ENCODE measurements at regions of chr9 and their contacts with region 1.

Region 1: GRCh38 chr9:34328987-34329832 is at the starts of genes KIF24 and NUDT2:
- DNase-seq: peak; percentile 100
- H3K4me3 Mint-ChIP-seq: peak within 1 kb of the TSS; percentile 92
- H3K27ac Mint-ChIP-seq: peak within 1 kb of the TSS; percentile 99
- H3K4me1 Mint-ChIP-seq: peaks cover 42% of the 10 kb centered on the region
- H3K27me3 Mint-ChIP-seq: no peaks in the 10 kb centered on the region
- CTCF ChIP-seq: no peak
- total RNA-seq, gene KIF24: 3.3 and 3.5 TPM in 2 replicates
- total RNA-seq, gene NUDT2: 30.6 and 35.0 TPM in 2 replicates

Region 2: GRCh38 chr9:34126207-34127034 is 202.8 kb before region 1 on chr9 and contains the start of gene DCAF12:
- CTCF ChIA-PET with region 1: no interaction called
- POLR2A ChIA-PET with region 1: interaction called, 5 read pairs
- intact Hi-C with region 1: loop called (anchors 2 kb)
- DNase-seq: peak; percentile 93
- H3K4me3 Mint-ChIP-seq: peak within 1 kb of the TSS; percentile 93
- H3K27ac Mint-ChIP-seq: peak within 1 kb of the TSS; percentile 93
- H3K4me1 Mint-ChIP-seq: peaks cover 40% of the 10 kb centered on the region
- H3K27me3 Mint-ChIP-seq: no peaks in the 10 kb centered on the region
- CTCF ChIP-seq: no peak
- total RNA-seq, gene DCAF12: 39.8 and 44.2 TPM in 2 replicates

Region 3: DNA sequence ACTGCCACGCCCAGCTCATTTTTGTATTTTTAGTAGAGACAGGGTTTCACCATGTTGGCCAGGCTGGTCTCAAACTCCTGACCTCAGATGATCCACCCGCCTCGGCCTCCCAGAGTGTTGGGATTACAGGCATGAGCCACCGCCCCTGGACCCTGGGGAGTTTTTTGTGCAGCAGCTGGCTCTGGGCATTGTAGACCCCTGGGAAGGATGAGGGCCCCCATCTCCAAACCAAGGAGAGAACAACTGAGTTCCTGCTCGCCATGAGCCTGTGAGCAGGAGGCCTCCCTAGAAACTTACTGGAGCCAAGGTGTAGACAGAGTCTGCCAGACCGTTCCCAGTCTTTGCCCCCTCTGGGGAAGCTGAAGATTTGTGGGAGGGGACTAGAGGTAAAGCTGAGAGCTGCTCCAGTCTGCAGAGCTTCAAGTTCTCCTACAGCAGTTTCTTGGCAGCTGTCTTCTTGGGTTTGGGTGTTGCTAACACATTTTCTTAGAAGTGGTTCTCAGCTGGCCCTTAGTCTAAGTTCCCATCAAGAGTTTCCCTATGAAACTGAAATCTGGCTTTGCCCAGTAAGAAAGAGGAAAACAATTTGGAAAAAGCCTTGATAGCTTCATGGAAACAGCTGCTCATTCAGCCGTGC is 12.6 kb after region 1 on chr9:
- CTCF ChIA-PET with region 1: interaction called, 13 read pairs
- POLR2A ChIA-PET with region 1: interaction called, 5 read pairs
- intact Hi-C with region 1: no loop called
- DNase-seq: no peak
- H3K4me3 Mint-ChIP-seq: no peak overlapping the region
- H3K27ac Mint-ChIP-seq: no peak overlapping the region
- H3K4me1 Mint-ChIP-seq: no peaks in the 10 kb centered on the region
- H3K27me3 Mint-ChIP-seq: no peaks in the 10 kb centered on the region
- CTCF ChIP-seq: no peak

Region 4: DNA sequence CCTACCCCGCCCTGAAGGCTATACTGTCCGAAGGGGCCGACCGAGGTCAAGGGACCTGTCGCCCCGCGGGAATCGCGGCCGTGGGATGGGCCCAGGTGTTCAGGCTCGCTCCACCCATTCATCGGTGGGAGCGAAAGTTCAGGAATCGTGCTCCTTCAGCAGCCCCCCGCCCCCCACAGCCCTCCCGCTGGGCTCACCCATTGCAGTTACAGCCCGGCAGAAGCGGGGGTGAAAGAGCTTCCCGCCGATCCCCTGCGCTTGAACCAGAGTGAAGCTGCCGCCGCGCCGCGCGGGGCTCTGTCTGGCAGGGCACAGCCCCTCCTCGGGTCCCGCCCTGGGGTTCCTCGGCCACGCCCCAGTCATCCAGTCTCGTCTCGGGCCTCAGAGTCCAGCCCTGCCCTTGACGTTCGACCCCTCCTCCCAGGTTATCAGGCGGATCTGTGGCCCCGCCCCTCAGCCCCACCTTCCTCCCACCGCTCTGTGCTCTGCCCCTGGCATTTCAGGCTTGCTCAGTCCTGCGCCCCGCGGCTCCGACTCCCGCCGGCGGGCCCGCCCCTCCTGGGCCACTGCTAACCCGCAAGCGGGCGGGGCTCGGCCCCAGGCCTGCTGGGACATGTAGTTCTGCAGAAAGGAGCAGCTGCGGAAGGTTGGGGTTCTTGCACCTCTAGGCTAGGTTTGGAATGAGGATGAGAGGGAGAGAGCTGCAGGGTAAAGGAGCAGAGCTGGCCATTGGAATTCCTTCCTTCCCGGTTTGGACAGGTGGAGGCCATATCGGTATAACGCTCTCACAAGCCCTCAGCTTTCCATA is 47.6 kb after region 1 on chr9 and contains the start of gene MYORG:
- CTCF ChIA-PET with region 1: interaction called, 198 read pairs
- POLR2A ChIA-PET with region 1: interaction called, 77 read pairs
- intact Hi-C with region 1: loop called (anchors 1 kb)
- DNase-seq: peak; percentile 98
- H3K4me3 Mint-ChIP-seq: peak within 1 kb of the TSS; percentile 72
- H3K27ac Mint-ChIP-seq: peak within 1 kb of the TSS; percentile 68
- H3K4me1 Mint-ChIP-seq: peaks cover 35% of the 10 kb centered on the region
- H3K27me3 Mint-ChIP-seq: no peaks in the 10 kb centered on the region
- CTCF ChIP-seq: no peak
- total RNA-seq, gene MYORG: 2.4 and 2.9 TPM in 2 replicates

Measured in MCF 10A (cell line).